ENCODE measurements at regions of chr4 and their contacts with region 1.

Region 1: DNA sequence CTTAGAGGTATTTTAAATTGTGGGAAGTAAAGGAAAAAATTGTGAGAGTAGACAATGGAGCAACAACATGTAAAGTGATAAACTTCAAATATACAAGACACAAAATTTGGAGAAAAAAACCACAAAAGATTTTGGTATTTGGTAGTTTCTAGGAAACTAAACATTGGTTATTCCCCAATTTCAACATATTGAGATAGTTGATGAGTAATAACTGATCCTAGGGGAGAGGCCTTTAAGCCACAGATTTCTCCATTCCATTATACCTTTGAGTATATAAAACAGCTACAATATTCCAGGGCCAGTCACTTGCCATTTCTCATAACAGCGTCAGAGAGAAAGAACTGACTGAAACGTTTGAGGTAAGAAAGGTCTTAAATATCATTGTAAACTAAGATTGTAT is at the start of gene FDCSP:
- DNase-seq: no peak
- H3K4me3 ChIP-seq: no peak within 1 kb of the TSS
- H3K27ac ChIP-seq: no peak within 1 kb of the TSS
- H3K4me1 ChIP-seq: no peaks in the 10 kb centered on the region
- H3K27me3 ChIP-seq: no peaks in the 10 kb centered on the region
- CTCF ChIP-seq: no peak

Region 2: DNA sequence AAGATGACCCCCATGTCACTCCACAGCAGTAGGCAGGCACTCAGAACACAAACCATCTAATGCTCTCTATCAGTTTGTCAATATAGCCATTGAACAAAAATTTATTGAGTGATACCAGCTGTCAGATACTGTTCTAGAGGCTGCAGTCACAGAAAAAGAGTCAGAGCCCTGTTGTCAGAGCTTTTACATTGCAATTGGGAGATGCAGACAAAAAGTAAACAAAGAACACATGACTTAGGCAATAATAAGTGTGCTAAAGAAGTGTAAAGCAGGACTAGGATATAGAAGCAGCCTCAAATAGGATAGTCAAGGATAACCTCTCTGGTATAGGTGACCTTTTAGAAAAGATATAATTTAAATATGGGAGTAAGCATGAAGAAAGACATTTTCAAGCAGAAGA is 166.7 kb before region 1 on chr4:
- intact Hi-C with region 1: loop called (anchors 5 kb)
- DNase-seq: no peak
- H3K4me3 ChIP-seq: no peak overlapping the region
- H3K27ac ChIP-seq: no peak overlapping the region
- H3K4me1 ChIP-seq: no peaks in the 10 kb centered on the region
- H3K27me3 ChIP-seq: no peaks in the 10 kb centered on the region
- CTCF ChIP-seq: no peak

Region 3: DNA sequence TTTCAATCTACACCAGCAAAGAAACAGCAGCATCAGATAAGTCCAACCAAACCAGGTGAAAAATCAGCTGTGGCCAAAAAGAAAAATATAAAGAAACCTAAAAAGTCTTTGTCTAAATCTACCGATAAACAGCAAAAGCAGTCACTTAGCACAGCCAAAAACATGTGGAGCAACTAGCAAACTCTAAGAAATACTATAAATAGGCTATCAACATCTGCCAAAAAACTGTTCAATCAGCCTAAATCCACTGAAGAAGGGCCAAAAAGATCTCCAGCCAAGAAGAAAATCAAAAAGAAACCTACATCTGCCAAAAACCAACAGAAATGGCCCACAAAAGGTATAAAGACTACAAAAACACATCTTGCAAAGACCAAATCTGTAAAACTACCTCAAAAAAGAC is 72.2 kb after region 1 on chr4:
- intact Hi-C with region 1: no loop called
- DNase-seq: no peak
- H3K4me3 ChIP-seq: no peak overlapping the region
- H3K27ac ChIP-seq: no peak overlapping the region
- H3K4me1 ChIP-seq: peaks cover 0 to 19% (median 10%) of the 10 kb centered on the region in 4 donors
- H3K27me3 ChIP-seq: no peaks in the 10 kb centered on the region
- CTCF ChIP-seq: no peak

Measured in tibial artery (tissue), 4 donors.